ENCODE measurements at regions of chr2 and their contacts with region 1.

Region 1: GRCh38 chr2:231411831-231412617 is 16.5 kb downstream of the B3GNT7 start:
- DNase-seq: peak; percentile 29
- H3K4me3 ChIP-seq: peak overlapping the region; percentile 64
- H3K27me3 ChIP-seq: no peaks in the 10 kb centered on the region; the same call in 1 of the 2 replicates
- CTCF ChIP-seq: peak; percentile 93

Region 2: DNA sequence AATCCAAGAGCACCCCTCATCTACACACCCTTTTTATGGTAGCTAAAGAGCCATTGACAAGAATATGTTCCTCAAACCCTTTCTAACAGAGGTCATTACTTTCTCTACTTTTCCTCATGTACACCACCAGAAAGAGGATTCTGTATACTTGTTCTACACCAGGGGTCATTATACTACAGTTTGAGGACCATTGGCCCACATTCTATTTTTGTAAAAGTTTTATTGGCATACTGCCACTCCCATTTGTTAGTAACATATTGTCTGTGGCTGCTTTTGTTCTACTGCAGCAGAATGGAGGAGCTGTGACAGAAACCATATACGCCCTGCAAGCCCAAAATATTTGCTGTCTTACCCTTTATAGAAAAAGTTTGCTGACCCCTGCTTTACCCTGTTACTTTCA is 301.5 kb before region 1 on chr2:
- CTCF ChIA-PET with region 1: interaction called, 10 read pairs
- POLR2A ChIA-PET with region 1: no interaction called
- DNase-seq: no peak
- H3K4me3 ChIP-seq: no peak overlapping the region
- H3K27me3 ChIP-seq: no peaks in the 10 kb centered on the region
- CTCF ChIP-seq: 0 out of 2 replicates have a peak, but pooled peaks have one; percentile 33

Region 3: GRCh38 chr2:231227309-231228162 is 184.5 kb before region 1 on chr2:
- CTCF ChIA-PET with region 1: interaction called, 51 read pairs
- POLR2A ChIA-PET with region 1: no interaction called
- DNase-seq: no peak
- H3K4me3 ChIP-seq: no peak overlapping the region
- H3K27me3 ChIP-seq: no peaks in the 10 kb centered on the region
- CTCF ChIP-seq: peak; percentile 79

Region 4: GRCh38 chr2:231308631-231309428 is 103.2 kb before region 1 on chr2:
- CTCF ChIA-PET with region 1: interaction called, 10 read pairs
- POLR2A ChIA-PET with region 1: no interaction called
- DNase-seq: no peak
- H3K4me3 ChIP-seq: no peak overlapping the region
- H3K27me3 ChIP-seq: no peaks in the 10 kb centered on the region
- CTCF ChIP-seq: no peak

Region 5: DNA sequence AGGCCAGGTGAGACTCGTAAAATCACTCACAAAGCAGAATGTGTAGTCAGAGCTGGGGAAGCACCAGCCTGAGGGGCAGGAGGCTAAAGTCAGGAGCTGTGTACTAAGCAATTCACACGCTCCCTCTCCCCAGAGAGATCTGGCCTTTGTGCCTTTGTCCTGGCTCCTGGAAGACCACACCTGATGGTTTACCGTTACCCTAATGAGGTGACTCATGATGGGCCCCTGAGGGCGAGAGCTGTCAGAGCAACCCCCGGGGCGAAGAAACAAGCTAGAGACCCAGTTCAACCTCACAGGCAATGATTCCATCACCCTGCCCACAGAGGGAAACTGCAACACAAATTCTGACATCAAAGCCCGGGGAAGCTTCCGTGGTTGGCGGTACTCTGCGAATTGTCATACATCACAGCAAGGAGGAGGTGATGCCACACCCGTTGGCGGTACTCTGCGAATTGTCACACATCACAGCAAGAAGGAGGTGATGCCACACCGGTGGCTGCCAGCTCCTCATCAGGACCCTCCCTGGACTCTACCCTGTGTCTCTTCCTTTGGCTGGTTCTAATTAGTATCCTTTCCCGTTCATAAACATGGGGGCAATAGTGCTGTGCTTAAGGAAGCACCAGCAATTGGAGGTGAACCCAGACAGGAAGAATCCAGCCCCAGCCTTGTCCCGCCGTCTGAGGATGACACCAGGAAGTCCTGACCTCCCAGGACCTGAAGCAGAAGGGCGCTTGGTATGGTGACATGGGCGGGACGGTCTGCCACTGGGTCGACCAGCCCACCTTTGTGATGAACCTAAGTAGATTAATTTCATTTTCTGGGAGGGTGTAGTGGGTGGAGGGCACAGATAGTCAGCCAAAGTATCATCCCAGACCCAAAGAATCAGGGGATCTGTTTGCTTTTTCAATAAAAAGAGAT is 14.0 kb after region 1 on chr2:
- CTCF ChIA-PET with region 1: interaction called, 23 read pairs
- POLR2A ChIA-PET with region 1: no interaction called
- DNase-seq: no peak
- H3K4me3 ChIP-seq: no peak overlapping the region
- H3K27me3 ChIP-seq: no peaks in the 10 kb centered on the region; the same call in 1 of the 2 replicates
- CTCF ChIP-seq: no peak

Region 6: GRCh38 chr2:231612179-231613053 is 200.4 kb after region 1 on chr2:
- CTCF ChIA-PET with region 1: no interaction called
- POLR2A ChIA-PET with region 1: no interaction called
- DNase-seq: peak; percentile 74
- H3K4me3 ChIP-seq: no peak overlapping the region
- H3K27me3 ChIP-seq: no peaks in the 10 kb centered on the region
- CTCF ChIP-seq: peak; percentile 97

Region 7: DNA sequence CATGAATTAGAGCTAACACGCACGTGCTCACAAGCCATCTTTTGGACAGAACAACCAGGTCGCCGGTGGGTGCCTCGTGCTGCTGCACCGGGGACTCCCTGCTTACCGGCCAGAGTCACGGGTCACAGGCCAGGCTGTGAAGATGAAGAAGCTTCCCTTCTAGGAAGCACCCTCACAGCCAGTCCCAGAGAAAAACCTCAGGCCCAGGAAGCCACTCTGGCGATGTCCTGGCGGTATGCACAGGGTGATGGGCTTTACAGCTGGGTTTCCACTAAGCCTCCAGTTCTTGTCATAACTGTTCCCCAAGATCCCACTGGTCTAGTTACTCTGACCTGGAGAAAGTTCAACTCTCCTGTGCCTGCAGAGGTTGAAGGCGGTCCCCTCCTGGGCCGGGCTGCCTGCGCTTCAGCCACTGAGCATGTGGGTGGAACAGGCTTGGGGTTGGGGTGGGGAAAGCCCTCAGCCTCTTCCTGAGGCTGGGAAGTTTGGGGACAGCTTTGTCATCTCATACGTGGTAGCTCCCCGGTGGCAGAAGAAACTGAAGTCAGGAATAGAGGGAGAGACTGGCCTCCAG is 534.3 kb after region 1 on chr2:
- CTCF ChIA-PET with region 1: no interaction called
- POLR2A ChIA-PET with region 1: no interaction called
- DNase-seq: no peak
- H3K4me3 ChIP-seq: no peak overlapping the region
- H3K27me3 ChIP-seq: no peaks in the 10 kb centered on the region; the same call in 1 of the 2 replicates
- CTCF ChIP-seq: no peak

Measured in BJ (cell line).